ENCODE measurements at regions of chr16 and their contacts with region 1.

Region 1: GRCh38 chr16:11354733-11355574 is 9.7 kb downstream of the RMI2 start:
- DNase-seq: no peak
- H3K4me3 ChIP-seq: no peak overlapping the region
- H3K27ac ChIP-seq: no peak overlapping the region
- H3K4me1 ChIP-seq: no peaks in the 10 kb centered on the region
- H3K27me3 ChIP-seq: no peaks in the 10 kb centered on the region
- CTCF ChIP-seq: no peak
- POLR2A ChIP-seq: no peak

Region 2: DNA sequence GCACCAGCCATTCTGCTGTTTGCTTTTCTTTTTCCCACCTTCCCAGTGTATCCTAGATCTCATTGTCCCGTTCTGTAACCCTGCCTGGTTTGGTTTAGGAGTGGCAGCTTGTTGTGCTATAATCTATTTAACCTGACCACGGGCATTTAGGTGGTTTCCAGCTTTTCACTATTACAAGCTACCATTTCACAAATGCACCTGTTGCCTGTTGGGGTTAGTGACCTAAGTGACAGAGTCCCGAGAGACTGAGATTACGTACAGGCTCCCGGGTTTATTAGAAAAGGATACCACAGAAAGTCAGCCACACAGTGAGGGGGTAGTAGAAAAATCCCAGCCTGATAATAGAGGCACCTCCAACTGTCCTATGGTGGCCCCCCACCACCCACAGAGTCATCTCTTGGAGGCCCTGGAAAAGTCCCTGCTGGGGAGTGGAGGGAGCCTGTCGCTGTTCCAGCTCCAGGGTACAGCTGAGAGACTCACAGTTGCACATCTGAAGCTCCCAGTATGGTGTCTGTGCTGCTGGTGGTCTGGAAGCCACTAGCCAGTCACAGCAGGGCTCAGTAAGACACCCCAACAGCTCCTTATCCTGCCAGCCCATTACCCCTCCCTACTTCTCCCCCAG is 389.4 kb before region 1 on chr16:
- intact Hi-C with region 1: loop called (anchors 5 kb)
- DNase-seq: no peak
- H3K4me3 ChIP-seq: no peak overlapping the region
- H3K27ac ChIP-seq: no peak overlapping the region
- H3K4me1 ChIP-seq: peaks cover 0 to 3% of the 10 kb centered on the region in 2 donors
- H3K27me3 ChIP-seq: no peaks in the 10 kb centered on the region
- CTCF ChIP-seq: no peak
- POLR2A ChIP-seq: no peak